ENCODE measurements at regions of chr16 and their contacts with region 1.

Region 1: DNA sequence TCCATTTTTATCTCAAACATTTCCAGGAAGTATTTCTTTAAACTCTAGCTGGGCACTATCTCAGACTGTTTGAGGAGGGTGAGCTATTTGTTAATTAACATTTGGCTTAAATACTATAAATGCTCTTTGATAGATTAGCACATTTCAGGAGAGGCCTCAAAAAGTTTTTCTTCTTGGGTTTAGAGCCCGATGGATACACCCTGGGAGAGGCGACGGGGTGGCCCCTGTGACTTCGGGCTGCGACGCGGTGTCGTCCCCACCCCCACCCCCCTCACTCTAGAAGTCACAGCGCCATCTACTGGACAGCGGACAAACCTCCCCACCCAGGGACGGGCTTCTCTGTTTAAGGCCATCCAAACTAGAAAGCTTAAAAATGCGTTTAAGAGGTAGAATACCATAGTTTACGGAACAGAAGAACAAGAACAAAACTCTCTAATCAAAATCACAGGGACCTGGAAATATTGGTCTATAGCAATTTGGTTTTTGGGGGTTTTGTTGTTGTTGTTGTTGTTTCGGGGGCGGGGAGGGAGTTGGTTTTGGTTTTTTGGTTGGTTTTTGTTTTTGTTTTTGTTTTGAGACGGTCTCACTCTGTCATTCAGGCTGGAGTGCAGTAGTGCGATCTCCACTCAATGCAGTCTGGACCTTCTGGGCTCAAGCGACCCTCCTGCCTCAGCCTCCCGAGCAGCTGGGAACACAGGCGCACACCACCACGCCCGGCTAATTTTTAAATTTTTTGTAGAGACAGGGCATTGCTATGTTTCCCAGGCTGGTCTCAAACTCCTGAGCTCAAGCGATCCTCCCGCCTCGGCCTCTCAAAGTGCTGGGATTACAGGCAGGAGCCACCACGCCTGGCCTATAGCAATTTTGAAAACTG is 254.4 kb downstream of the C16orf95 start:
- DNase-seq: peak; percentile 79
- H3K4me3 Mint-ChIP-seq: no peak overlapping the region
- H3K27ac Mint-ChIP-seq: no peak overlapping the region
- H3K4me1 Mint-ChIP-seq: no peaks in the 10 kb centered on the region
- H3K27me3 Mint-ChIP-seq: peaks cover 34% of the 10 kb centered on the region

Region 2: DNA sequence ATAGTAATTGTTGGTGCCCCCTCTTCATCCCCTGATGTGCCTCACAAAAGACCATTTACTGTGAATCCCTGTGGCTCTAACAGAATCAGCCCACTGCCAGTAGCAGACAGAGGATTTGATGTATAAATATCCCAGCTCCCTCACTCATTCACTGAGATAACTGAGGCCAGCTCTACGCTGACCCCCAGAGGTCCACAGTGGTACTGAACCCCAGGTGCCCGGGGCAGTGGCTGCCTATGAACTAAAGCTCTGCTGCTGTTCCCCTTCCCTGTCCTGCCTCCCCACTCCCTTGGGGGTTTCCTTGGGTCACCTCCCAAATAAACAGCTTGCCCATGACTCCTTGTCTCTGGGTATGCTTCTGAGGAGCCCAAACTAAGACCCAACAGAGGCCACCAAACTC is 188.7 kb before region 1 on chr16:
- CTCF ChIA-PET with region 1: interaction called, 5 read pairs
- intact Hi-C with region 1: loop called (anchors 10 kb)
- DNase-seq: peak; percentile 53
- H3K4me3 Mint-ChIP-seq: no peak overlapping the region
- H3K27ac Mint-ChIP-seq: no peak overlapping the region
- H3K4me1 Mint-ChIP-seq: no peaks in the 10 kb centered on the region
- H3K27me3 Mint-ChIP-seq: peaks cover 25% of the 10 kb centered on the region

Region 3: GRCh38 chr16:87278191-87279095 is 215.6 kb after region 1 on chr16:
- CTCF ChIA-PET with region 1: no interaction called
- intact Hi-C with region 1: loop called (anchors 5 kb)
- DNase-seq: peak; percentile 65
- H3K4me3 Mint-ChIP-seq: no peak overlapping the region
- H3K27ac Mint-ChIP-seq: no peak overlapping the region
- H3K4me1 Mint-ChIP-seq: peaks cover 7% of the 10 kb centered on the region
- H3K27me3 Mint-ChIP-seq: peaks cover 5% of the 10 kb centered on the region

Measured in activated naive CD4-positive, alpha-beta T cell treated with anti-CD3 and anti-CD28 coated beads for 36 hours (primary cell).